Activated CD4-positive, alpha-beta memory T cell treated with anti-CD3 and anti-CD28 coated beads, Interleukin-2, amount 10 ng/mL, durations not matched to agents 7 days and 5 days (primary cell): ENCODE measurements at regions of chr19 and their contacts with region 1.

Region 1: GRCh38 chr19:38544034-38544958 is 73.5 kb downstream of the MAP4K1 start:
- DNase-seq: peak; percentile 49
- H3K4me3 Mint-ChIP-seq: peak overlapping the region; percentile 50
- H3K27ac Mint-ChIP-seq: peak overlapping the region; percentile 75
- H3K4me1 Mint-ChIP-seq: peaks cover 38% of the 10 kb centered on the region
- H3K27me3 Mint-ChIP-seq: no peaks in the 10 kb centered on the region

Region 2: GRCh38 chr19:38441657-38442348 is 102.5 kb before region 1 on chr19:
- CTCF ChIA-PET with region 1: no interaction called
- POLR2A ChIA-PET with region 1: no interaction called
- DNase-seq: no peak
- H3K4me3 Mint-ChIP-seq: no peak overlapping the region
- H3K27ac Mint-ChIP-seq: no peak overlapping the region
- H3K4me1 Mint-ChIP-seq: peaks cover 10% of the 10 kb centered on the region
- H3K27me3 Mint-ChIP-seq: no peaks in the 10 kb centered on the region

Region 3: DNA sequence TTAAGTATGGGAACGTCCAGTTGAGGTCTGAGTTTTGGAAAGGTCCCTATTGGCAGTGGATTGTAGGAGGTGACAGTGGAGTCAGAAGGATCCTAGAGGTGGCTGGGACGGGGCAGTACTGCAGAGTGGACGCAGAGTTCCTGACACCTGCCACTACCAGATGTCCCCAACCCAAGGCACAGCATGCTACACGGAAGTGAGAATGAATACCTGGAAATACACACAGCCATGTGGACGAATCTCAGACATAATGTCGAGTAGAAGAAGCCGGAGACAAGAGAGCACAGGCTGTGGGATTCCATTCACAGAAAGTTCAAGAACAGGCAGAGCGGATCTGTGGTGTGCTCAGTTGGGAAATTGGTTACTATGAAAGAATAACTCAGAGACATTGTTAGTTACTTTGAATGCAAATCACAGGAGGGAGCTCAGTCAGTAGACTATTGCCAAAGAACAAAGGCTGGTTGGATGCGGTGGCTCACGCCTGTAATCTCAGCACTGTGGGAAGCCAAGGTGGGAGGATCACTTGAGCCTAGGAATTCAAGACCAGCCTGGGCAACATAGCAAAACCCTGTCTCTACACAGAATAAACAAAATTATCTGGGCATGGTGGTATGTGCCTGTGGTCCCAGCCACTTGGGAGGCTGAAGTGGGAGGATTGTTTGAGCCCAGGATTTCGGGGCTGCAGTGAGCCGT is 73.4 kb before region 1 on chr19:
- CTCF ChIA-PET with region 1: no interaction called
- POLR2A ChIA-PET with region 1: no interaction called
- DNase-seq: no peak
- H3K4me3 Mint-ChIP-seq: no peak overlapping the region
- H3K27ac Mint-ChIP-seq: no peak overlapping the region
- H3K4me1 Mint-ChIP-seq: no peaks in the 10 kb centered on the region
- H3K27me3 Mint-ChIP-seq: peaks cover 1% of the 10 kb centered on the region

Region 4: DNA sequence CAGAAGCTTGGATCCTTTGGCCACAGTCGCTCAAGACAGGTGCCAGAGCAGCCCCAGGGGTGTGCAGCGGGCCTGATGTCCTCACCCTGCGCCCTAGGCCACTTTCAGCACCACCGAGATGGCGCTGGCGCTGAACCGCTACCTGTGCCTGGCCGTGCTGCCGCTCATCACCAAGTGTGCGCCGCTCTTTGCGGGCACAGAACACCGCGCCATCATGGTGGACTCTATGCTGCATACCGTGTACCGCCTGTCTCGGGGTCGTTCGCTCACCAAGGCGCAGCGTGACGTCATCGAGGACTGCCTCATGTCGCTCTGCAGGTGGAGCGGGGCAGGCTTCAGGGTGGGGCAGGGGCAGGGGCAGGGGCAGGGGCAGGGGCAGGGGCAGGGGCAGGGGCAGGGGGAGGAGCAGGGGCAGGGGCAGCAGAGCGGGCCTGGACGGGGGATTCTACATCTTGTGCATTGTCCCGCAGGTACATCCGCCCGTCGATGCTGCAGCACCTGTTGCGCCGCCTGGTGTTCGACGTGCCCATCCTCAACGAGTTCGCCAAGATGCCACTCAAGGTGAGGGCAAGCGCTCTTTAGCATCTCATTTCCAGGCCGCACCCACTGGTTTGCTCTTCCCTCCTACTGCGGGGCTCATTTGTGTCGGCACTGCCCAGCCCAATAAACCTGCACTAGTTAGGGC is 41.7 kb before region 1 on chr19:
- CTCF ChIA-PET with region 1: no interaction called
- POLR2A ChIA-PET with region 1: no interaction called
- DNase-seq: no peak
- H3K4me3 Mint-ChIP-seq: no peak overlapping the region
- H3K27ac Mint-ChIP-seq: no peak overlapping the region
- H3K4me1 Mint-ChIP-seq: peaks cover 9% of the 10 kb centered on the region
- H3K27me3 Mint-ChIP-seq: no peaks in the 10 kb centered on the region

Region 5: GRCh38 chr19:38514812-38515633 is 29.3 kb before region 1 on chr19:
- CTCF ChIA-PET with region 1: interaction called, 15 read pairs
- POLR2A ChIA-PET with region 1: no interaction called
- DNase-seq: peak; percentile 80
- H3K4me3 Mint-ChIP-seq: no peak overlapping the region
- H3K27ac Mint-ChIP-seq: peak overlapping the region; percentile 31
- H3K4me1 Mint-ChIP-seq: peaks cover 31% of the 10 kb centered on the region
- H3K27me3 Mint-ChIP-seq: peaks cover 4% of the 10 kb centered on the region

Region 6: GRCh38 chr19:38559428-38560401 is 15.4 kb after region 1 on chr19:
- CTCF ChIA-PET with region 1: interaction called, 10 read pairs
- POLR2A ChIA-PET with region 1: interaction called, 8 read pairs
- DNase-seq: peak; percentile 72
- H3K4me3 Mint-ChIP-seq: peak overlapping the region; percentile 46
- H3K27ac Mint-ChIP-seq: peak overlapping the region; percentile 94
- H3K4me1 Mint-ChIP-seq: peaks cover 74% of the 10 kb centered on the region
- H3K27me3 Mint-ChIP-seq: peaks cover 15% of the 10 kb centered on the region

Region 7: GRCh38 chr19:38634757-38635482 is 90.6 kb after region 1 on chr19:
- CTCF ChIA-PET with region 1: interaction called, 45 read pairs
- POLR2A ChIA-PET with region 1: interaction called, 9 read pairs
- DNase-seq: peak; percentile 81
- H3K4me3 Mint-ChIP-seq: no peak overlapping the region
- H3K27ac Mint-ChIP-seq: peak overlapping the region; percentile 87
- H3K4me1 Mint-ChIP-seq: peaks cover 50% of the 10 kb centered on the region
- H3K27me3 Mint-ChIP-seq: no peaks in the 10 kb centered on the region